ENCODE measurements at regions of chr1 and their contacts with region 1.

Region 1: GRCh38 chr1:167122568-167122967 is 28.7 kb downstream of the STYXL2 start:
- H3K4me3 ChIP-seq: no peak overlapping the region
- H3K27ac ChIP-seq: no peak overlapping the region
- H3K4me1 ChIP-seq: no peaks in the 10 kb centered on the region; the same call in 1 of the 2 replicates
- CTCF ChIP-seq: no peak

Region 2: GRCh38 chr1:167136191-167136614 is 13.6 kb after region 1 on chr1:
- CTCF ChIA-PET with region 1: interaction called, 10 read pairs
- POLR2A ChIA-PET with region 1: no interaction called
- H3K4me3 ChIP-seq: no peak overlapping the region
- H3K27ac ChIP-seq: no peak overlapping the region
- H3K4me1 ChIP-seq: no peaks in the 10 kb centered on the region
- CTCF ChIP-seq: no peak